PC-9 (cell line): ENCODE measurements at regions of chr9 and their contacts with region 1.

Region 1: DNA sequence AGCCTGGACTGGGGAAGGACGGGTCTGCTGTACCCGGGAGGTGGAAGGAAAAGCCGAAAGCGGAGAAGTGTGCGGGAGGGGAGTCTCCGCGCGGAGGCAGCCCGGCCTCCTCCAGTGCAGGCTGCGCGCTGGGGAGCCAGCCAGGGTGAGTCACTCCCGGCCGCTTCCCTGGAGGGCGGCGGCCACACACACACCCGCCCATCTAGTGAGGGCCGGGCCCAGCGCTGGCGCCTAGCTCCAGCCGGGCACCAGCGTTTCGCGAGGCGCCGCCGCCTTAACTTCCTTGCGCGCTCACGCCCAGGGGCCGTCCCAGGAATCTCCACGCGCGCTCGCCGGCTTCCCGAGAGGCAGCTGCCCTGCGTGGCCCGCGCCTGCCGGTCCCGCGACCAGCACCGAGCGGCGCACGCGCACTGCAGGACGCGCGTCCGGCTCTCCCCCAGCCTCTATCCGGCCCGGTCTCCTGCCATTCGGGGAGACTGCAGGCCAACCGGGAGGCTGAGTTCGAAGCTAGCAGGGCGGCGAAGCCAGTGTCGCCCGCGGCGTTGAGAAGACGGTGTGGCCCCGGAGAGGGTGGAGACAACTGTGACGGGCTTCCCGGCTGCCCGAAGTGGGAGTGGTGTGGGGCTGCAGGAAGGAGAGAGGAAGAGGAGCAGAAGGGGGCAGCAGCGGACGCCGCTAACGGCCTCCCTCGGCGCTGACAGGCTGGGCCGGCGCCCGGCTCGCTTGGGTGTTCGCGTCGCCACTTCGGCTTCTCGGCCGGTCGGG is at the start of gene JAK2:
- DNase-seq: peak; percentile 81 to 89
- H3K4me3 ChIP-seq: peak within 1 kb of the TSS; percentile 65
- H3K27ac ChIP-seq: peak within 1 kb of the TSS; percentile 81
- H3K4me1 ChIP-seq: peaks cover 33% of the 10 kb centered on the region
- H3K27me3 ChIP-seq: no peaks in the 10 kb centered on the region
- CTCF ChIP-seq: no peak; the same call in 1 of the 2 replicates
- total RNA-seq, gene JAK2: 2.7 and 4.9 TPM in 2 replicates

Region 2: DNA sequence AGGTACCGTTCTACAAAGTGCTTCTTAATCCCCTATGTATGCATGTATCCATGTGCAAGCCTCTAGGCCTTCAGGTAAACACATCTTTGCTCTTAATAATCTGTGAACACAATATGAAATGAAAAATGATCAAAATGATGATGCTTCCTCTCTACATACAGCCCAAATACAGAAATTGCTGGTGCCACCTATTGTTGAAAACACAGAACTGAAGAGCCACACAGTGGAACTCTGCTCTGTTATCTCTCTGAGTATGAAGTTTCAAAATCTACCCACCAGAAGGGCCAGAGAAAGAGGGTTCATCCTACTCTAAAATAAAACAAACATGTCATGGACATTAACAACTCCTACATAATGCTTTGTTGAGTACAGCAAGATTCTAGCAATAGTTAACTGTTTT is 756.2 kb before region 1 on chr9:
- CTCF ChIA-PET with region 1: no interaction called
- POLR2A ChIA-PET with region 1: no interaction called
- intact Hi-C with region 1: no loop called
- DNase-seq: no peak
- H3K4me3 ChIP-seq: no peak overlapping the region
- H3K27ac ChIP-seq: no peak overlapping the region
- H3K4me1 ChIP-seq: peaks cover 13% of the 10 kb centered on the region; the same call in 1 of the 2 replicates
- H3K27me3 ChIP-seq: no peaks in the 10 kb centered on the region
- CTCF ChIP-seq: peak; percentile 55

Region 3: GRCh38 chr9:4762108-4762885 is 222.5 kb before region 1 on chr9:
- CTCF ChIA-PET with region 1: no interaction called
- POLR2A ChIA-PET with region 1: no interaction called
- intact Hi-C with region 1: loop called (anchors 1 kb)
- DNase-seq: peak in 1 of 2 experiments; percentile 59
- H3K4me3 ChIP-seq: no peak overlapping the region
- H3K27ac ChIP-seq: no peak overlapping the region
- H3K4me1 ChIP-seq: 0 out of 2 replicates have a peak, but pooled peaks cover 3% of the 10 kb centered on the region
- H3K27me3 ChIP-seq: no peaks in the 10 kb centered on the region
- CTCF ChIP-seq: peak; percentile 78

Region 4: DNA sequence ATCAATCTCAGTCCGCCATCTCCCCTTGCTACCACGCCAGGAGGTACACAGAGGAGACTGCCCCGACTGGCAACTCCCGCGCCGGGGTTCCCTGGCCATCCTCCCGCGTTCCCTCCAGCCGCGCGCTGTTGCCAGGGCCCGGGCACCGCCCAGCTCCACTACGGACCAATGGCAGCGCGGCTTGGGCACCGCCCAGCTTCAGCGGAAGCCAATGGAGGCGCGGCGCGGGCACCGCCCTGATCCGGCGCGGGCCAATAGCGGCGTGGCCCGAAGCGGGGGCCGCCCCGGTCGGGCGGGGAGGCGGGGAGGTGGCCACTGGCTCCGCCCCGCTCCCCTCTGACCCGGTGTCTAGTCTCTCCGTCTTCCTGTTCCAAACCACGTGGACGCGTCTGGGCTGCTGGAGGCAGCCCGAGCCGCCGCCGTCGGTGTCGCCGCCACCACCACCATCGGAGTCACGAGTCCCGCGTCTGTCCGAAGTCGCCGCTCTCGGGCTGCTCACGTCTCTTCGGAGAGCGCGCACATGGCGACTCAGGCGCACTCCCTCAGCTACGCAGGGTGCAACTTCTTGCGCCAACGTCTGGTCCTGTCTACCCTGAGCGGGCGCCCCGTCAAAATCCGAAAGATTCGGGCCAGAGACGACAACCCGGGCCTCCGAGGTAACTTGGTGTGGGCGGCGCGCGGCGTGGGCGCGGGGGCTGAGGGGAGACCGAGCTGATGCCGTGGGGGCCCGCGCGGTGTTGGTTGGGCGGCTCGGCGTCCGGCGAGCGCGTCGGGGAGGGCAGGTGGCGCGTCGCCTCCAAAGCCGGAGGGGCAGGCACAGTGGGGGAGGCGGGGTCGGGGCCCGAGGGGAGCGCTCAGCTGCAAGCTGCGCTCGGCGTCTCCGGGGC is 192.0 kb before region 1 on chr9 and contains the start of gene RCL1:
- CTCF ChIA-PET with region 1: no interaction called
- POLR2A ChIA-PET with region 1: no interaction called
- intact Hi-C with region 1: loop called (anchors 2 kb)
- DNase-seq: peak; percentile 77 to 94
- H3K4me3 ChIP-seq: peak within 1 kb of the TSS; percentile 94
- H3K27ac ChIP-seq: peak within 1 kb of the TSS; percentile 69
- H3K4me1 ChIP-seq: peaks cover 10% of the 10 kb centered on the region; the same call in 1 of the 2 replicates
- H3K27me3 ChIP-seq: no peaks in the 10 kb centered on the region
- CTCF ChIP-seq: no peak
- total RNA-seq, gene RCL1: 8.5 and 9.5 TPM in 2 replicates

Region 5: DNA sequence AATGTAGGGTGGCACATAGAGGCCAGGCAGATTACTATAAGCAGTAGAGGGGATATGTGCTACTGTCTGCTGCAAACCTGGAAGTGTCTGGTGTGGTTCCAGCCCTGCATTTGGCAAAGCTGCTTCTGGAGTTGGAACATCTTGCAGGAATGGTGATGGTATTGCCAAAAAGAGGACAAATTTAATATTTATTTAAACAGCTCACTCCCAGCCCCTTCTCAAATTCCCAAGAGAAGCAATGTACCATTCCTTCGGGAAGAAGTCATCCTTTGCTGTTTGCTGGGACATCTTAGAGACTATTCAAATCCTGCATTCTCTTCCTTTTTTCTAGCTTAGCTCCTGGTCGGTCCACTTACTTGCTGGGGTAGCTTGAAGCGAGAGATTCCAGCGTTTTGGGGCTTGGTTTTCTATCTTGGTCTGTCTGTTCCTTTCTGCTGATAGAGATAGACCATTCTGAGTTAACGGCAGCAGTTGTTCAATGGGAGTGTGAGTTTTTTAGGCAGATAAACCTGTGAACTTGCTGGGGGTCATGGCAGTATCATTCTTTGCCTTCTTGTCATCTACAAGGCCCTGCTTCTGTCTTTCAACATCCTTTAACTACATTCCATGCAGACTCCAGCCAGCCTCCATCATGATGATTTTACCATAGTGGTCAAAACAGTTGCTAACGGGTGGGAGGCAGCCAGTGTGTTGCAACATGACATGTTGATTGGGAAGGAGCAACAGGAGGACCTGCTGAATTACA is 122.1 kb before region 1 on chr9:
- CTCF ChIA-PET with region 1: no interaction called
- POLR2A ChIA-PET with region 1: interaction called, 4 read pairs
- intact Hi-C with region 1: loop called (anchors 10 kb)
- DNase-seq: no peak
- H3K4me3 ChIP-seq: no peak overlapping the region
- H3K27ac ChIP-seq: no peak overlapping the region
- H3K4me1 ChIP-seq: no peaks in the 10 kb centered on the region
- H3K27me3 ChIP-seq: no peaks in the 10 kb centered on the region
- CTCF ChIP-seq: no peak

Region 6: DNA sequence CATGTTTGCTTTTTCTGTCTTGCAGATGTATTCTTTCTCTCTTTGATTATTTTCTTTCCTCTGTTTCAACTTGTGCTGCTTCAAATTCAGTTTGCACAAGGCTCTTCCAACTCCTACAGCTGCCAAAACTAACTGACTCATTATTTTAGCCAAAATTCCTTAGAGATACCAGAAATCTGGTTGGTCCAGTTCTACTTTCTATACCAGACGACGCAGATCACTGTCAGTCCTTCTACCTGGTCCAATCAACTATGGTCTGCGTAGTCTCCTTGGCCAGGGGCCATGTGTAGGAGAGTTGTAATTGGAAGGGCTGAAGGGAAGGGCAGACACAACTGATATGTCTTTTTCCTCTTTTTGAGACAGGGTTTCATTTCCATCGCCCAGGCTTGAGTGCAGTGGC is 51.6 kb before region 1 on chr9:
- CTCF ChIA-PET with region 1: no interaction called
- POLR2A ChIA-PET with region 1: no interaction called
- intact Hi-C with region 1: loop called (anchors 2 kb)
- DNase-seq: peak in 1 of 2 experiments; percentile 52
- H3K4me3 ChIP-seq: no peak overlapping the region
- H3K27ac ChIP-seq: no peak overlapping the region
- H3K4me1 ChIP-seq: no peaks in the 10 kb centered on the region
- H3K27me3 ChIP-seq: no peaks in the 10 kb centered on the region
- CTCF ChIP-seq: no peak

Region 7: GRCh38 chr9:5437254-5438216 is 452.7 kb after region 1 on chr9 and contains the start of gene PLGRKT:
- CTCF ChIA-PET with region 1: no interaction called
- POLR2A ChIA-PET with region 1: interaction called, 6 read pairs
- intact Hi-C with region 1: loop called (anchors 10 kb)
- DNase-seq: peak; percentile 83 to 84
- H3K4me3 ChIP-seq: peak within 1 kb of the TSS; percentile 80
- H3K27ac ChIP-seq: peak within 1 kb of the TSS; percentile 84
- H3K4me1 ChIP-seq: peaks cover 24% of the 10 kb centered on the region
- H3K27me3 ChIP-seq: no peaks in the 10 kb centered on the region
- CTCF ChIP-seq: no peak; the same call in 1 of the 2 replicates
- total RNA-seq, gene PLGRKT: 13.5 and 22.0 TPM in 2 replicates

Region 8: GRCh38 chr9:5593904-5594303 is 609.1 kb after region 1 on chr9:
- CTCF ChIA-PET with region 1: no interaction called
- POLR2A ChIA-PET with region 1: no interaction called
- intact Hi-C with region 1: loop called (anchors 10 kb)
- DNase-seq: no peak
- H3K4me3 ChIP-seq: no peak overlapping the region
- H3K27ac ChIP-seq: no peak overlapping the region
- H3K4me1 ChIP-seq: no peaks in the 10 kb centered on the region
- H3K27me3 ChIP-seq: no peaks in the 10 kb centered on the region
- CTCF ChIP-seq: no peak